ENCODE measurements at regions of chr2 and their contacts with region 1.

Region 1: GRCh38 chr2:64750817-64751285 is 97.1 kb upstream of the SERTAD2 start:
- DNase-seq: peak; percentile 97 to 99
- ATAC-seq: peak; percentile 77 to 92 (median 81)
- H3K4me3 ChIP-seq: peak overlapping the region; percentile 47
- H3K4me3 Mint-ChIP-seq: peak overlapping the region; percentile 96
- H3K27ac ChIP-seq: peak overlapping the region; percentile 95
- H3K27ac Mint-ChIP-seq: peak overlapping the region; percentile 77 to 96
- H3K4me1 ChIP-seq: peaks cover 5% of the 10 kb centered on the region
- H3K4me1 Mint-ChIP-seq: peaks cover 12 to 16% of the 10 kb centered on the region in 2 donors
- H3K27me3 ChIP-seq: no peaks in the 10 kb centered on the region
- H3K27me3 Mint-ChIP-seq: no peaks in the 10 kb centered on the region
- CTCF ChIP-seq: no peak

Region 2: DNA sequence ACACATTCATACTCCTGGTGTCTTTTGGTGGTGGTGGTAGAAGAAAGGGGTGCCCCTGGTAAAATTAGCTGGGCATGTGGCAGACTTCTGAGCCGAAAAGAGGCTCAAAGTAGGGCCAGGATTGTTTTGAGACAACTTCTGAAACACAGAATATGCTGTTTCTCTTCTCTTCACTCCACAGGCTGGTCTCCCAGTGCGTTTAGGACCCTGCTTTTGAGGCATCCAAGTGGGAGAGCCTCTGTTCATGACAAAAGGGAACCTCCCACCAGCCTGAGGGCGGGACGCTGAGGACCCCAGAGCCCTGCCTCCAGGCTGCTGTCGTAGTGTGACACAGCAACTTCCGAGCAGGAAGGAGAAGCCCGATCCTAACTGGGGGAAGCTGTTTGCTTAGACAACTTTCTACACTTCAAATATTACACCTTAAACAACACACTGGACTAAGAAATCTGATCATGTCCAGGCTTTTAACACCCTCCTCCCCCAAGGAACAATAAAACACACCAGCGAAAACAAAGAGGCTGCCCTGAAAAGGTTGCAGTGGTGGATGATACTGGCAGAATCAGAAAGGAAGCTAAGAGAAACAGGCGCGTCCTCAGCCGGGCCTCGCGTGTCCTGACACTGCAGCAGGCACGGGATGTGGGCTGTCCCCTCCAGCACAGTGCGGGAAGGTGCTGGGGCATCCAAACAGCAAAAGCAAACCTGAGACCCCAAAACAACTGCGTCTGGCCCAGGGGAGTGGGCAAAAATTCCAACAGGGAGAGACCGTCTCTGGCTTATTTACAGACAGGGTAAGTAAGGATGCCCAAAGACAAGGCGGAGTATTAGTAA is 106.5 kb before region 1 on chr2:
- intact Hi-C with region 1: loop called (anchors 2 kb)
- DNase-seq: peak; percentile 64 to 70
- ATAC-seq: peak; percentile 66 to 83 (median 68)
- H3K4me3 ChIP-seq: peak overlapping the region; percentile 23
- H3K4me3 Mint-ChIP-seq: peak overlapping the region; percentile 96
- H3K27ac ChIP-seq: peak overlapping the region; percentile 93
- H3K27ac Mint-ChIP-seq: peak overlapping the region; percentile 98 to 99
- H3K4me1 ChIP-seq: peaks cover 53% of the 10 kb centered on the region
- H3K4me1 Mint-ChIP-seq: peaks cover 59 to 67% of the 10 kb centered on the region in 2 donors
- H3K27me3 ChIP-seq: no peaks in the 10 kb centered on the region
- H3K27me3 Mint-ChIP-seq: no peaks in the 10 kb centered on the region
- CTCF ChIP-seq: no peak

Region 3: GRCh38 chr2:64730551-64731262 is 20.1 kb before region 1 on chr2:
- intact Hi-C with region 1: loop called (anchors 2 kb)
- DNase-seq: peak; percentile 28 to 77
- ATAC-seq: peak; percentile 62 to 76 (median 68)
- H3K4me3 ChIP-seq: peak overlapping the region; percentile 38
- H3K4me3 Mint-ChIP-seq: peak overlapping the region; percentile 88
- H3K27ac ChIP-seq: peak overlapping the region; percentile 75
- H3K27ac Mint-ChIP-seq: peak overlapping the region; percentile 90 to 95
- H3K4me1 ChIP-seq: peaks cover 17% of the 10 kb centered on the region
- H3K4me1 Mint-ChIP-seq: peaks cover 38 to 40% of the 10 kb centered on the region in 2 donors
- H3K27me3 ChIP-seq: no peaks in the 10 kb centered on the region
- H3K27me3 Mint-ChIP-seq: no peaks in the 10 kb centered on the region
- CTCF ChIP-seq: no peak

Region 4: DNA sequence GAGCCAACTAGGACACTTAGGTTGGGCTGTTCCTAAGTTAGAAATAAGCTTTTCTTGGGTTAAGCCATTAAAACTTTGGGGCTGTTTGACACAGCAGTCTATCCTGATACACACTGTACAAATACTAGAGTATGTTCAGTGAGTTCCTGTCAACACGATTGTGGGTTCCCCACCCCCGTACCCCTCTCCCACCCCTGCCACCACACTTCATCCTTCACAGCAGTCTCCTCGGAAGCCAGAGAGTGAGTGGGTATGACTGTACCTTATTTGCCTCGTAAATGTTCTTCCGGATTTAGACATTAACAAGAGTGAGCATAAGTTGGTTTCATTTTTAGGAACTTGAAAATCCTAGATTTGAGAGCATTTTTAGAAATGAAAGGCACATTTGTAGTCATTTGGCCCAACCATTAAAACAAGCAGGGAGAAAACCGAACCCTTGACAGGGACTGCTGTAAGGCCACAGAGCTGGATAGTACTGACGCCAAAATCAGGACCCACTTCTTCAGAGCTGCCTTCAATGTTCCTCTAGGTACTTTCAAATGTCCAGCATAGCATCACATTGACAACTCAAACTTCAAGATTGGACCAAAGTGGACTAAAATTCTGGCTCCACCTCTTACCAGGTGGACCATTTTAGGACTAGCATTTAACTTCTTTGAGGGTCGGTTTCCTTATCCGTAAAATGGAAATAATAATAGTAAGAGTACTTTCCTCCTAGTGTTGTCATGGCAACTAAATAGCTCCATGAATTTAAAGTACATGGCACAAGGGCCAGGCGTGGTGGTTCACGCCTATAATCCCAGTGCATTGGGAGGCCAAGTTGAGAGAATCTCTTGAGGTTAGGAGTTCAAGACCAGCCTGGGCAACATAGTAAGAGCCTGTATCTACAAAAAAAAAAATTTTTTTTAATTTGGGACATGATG is 69.2 kb after region 1 on chr2:
- intact Hi-C with region 1: loop called (anchors 5 kb)
- DNase-seq: peak; percentile 16 to 70
- ATAC-seq: peak; percentile 86 to 92 (median 88)
- H3K4me3 ChIP-seq: peak overlapping the region; percentile 5
- H3K4me3 Mint-ChIP-seq: peak overlapping the region; percentile 69
- H3K27ac ChIP-seq: peak overlapping the region; percentile 89
- H3K27ac Mint-ChIP-seq: peak overlapping the region; percentile 88 to 91
- H3K4me1 ChIP-seq: peaks cover 13% of the 10 kb centered on the region
- H3K4me1 Mint-ChIP-seq: peaks cover 19 to 21% of the 10 kb centered on the region in 2 donors
- H3K27me3 ChIP-seq: no peaks in the 10 kb centered on the region
- H3K27me3 Mint-ChIP-seq: no peaks in the 10 kb centered on the region
- CTCF ChIP-seq: no peak

Measured in natural killer cell (primary cell).